Posterior cingulate gyrus (tissue), 11 donors: ENCODE measurements at regions of chr4 and their contacts with region 1.

Region 1: GRCh38 chr4:104015680-104016253 is 296.0 kb upstream of the TACR3 start:
- DNase-seq: peak in 2 of 10 donors; percentile 3 to 38

Region 2: GRCh38 chr4:104064646-104065577 is 49.1 kb after region 1 on chr4:
- intact Hi-C with region 1: loop called (anchors 5 kb)
- DNase-seq: peak; percentile 19 to 95 (median 64)